Activated CD4-positive, alpha-beta memory T cell treated with anti-CD3 and anti-CD28 coated beads for 36 hours (primary cell): ENCODE measurements at regions of chr6 and their contacts with region 1.

Region 1: GRCh38 chr6:87277123-87277522 is 45.3 kb upstream of the SMIM8 start:
- DNase-seq: no peak
- H3K4me3 Mint-ChIP-seq: no peak overlapping the region
- H3K27ac Mint-ChIP-seq: no peak overlapping the region
- H3K4me1 Mint-ChIP-seq: peaks cover 9% of the 10 kb centered on the region
- H3K27me3 Mint-ChIP-seq: no peaks in the 10 kb centered on the region

Region 2: DNA sequence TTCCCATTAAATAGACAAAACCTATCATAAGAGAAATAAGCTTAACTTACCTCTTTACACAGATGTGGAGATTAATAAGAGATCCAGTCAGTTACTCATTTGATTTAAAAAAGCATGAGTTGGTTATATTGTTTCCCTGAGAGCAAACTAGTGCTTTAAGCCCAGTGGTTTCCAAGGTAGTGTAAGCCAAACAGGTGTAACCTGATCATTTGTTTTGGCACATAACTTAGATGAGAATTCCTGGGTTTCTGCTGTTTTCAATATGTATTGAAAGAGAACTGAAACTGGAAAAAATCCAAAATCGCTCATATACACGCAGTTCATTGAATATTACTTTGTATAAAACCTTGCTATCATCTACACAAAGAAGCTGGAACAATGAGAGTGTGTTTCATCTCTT is 14.8 kb after region 1 on chr6:
- CTCF ChIA-PET with region 1: no interaction called
- POLR2A ChIA-PET with region 1: no interaction called
- intact Hi-C with region 1: no loop called
- DNase-seq: no peak
- H3K4me3 Mint-ChIP-seq: no peak overlapping the region
- H3K27ac Mint-ChIP-seq: no peak overlapping the region
- H3K4me1 Mint-ChIP-seq: no peaks in the 10 kb centered on the region
- H3K27me3 Mint-ChIP-seq: peaks cover 19% of the 10 kb centered on the region

Region 3: DNA sequence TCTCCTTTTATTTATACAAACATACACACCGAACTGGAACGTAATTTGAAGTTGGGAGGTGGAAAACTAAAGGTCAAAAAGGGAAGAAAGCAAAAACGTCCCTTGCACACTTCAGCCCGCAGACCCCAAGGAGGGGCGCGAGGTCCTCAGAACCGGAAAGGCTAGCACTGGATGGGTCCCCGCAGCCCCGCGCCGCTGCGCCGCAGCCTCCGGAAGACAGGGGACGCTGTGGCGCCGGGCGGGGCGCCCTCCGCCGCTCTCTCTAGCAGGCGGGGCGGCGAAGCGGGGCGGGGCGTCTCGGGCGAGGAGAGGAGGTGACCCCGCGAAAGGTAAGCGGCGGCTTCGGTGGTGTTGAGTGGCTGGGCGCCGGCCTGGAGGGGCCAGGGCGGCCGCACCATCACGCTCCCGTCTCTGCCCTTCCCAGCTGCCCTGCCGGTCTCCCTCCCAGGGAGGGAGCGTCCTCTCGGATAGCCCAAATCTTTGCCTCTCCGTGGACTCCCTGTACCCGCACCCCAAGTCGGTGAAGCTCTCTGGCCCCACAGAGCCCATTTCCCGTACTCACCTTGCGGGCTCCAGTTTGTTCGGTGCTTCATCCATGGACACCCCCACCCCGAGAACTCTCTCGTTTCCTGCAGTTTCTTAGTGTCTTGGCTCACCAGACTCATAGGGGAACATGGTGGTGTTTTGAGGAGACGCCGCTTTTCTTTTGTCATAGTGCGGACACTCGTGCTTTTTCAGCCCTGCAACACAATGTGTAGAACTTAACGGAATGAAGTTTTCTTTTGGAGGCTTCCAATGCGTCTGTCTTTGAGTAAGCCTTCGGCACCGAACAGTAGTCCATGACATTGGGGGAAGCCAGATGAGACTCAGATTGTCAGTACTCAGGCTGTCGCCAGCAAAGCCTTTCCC is 45.4 kb after region 1 on chr6 and contains the start of gene SMIM8:
- CTCF ChIA-PET with region 1: no interaction called
- POLR2A ChIA-PET with region 1: no interaction called
- intact Hi-C with region 1: loop called (anchors 5 kb)
- DNase-seq: peak; percentile 90
- H3K4me3 Mint-ChIP-seq: peak within 1 kb of the TSS; percentile 98
- H3K27ac Mint-ChIP-seq: peak within 1 kb of the TSS; percentile 76
- H3K4me1 Mint-ChIP-seq: peaks cover 15% of the 10 kb centered on the region
- H3K27me3 Mint-ChIP-seq: no peaks in the 10 kb centered on the region
- total RNA-seq, gene SMIM8: 7.6 to 8.1 TPM